ENCODE measurements at regions of chr19 and their contacts with region 1.

Region 1: DNA sequence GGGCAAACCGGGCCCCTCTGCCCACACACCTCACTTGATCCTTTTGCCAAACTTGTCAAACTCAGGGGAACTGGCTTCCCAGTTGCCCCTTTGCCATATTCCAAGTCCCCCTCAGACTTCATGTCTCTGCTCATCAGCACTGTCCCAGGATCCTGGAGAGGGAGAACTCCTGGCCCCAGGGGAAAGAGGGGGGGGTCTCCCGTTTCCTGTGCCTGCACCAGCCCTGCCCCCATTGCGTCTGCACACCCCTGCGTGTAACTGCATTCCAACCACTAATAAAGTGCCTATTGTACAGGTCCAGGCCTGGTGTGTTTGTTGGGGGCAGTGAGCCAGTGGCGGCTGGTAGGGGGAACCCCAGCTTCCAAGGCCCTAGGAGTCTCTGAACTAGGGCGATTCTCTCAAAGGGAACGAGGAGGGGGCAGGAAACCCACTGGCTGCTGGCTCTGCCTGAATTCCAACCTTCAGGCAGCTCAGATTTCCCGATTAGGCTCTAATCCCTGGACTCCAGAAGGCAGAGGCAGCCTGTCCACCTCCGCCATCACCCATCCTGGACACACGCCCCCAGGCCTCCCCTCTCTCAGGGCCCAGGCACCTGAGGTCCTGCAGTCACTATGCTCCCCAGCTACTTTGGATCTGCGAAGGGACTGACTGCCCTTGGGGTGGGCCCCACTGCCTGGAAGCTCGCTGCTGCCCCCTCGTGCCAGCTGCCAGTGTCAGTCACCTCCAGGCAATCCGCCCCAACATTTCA is 9.7 kb upstream of the ILF3 start:
- DNase-seq: peak; percentile 89
- ATAC-seq: peak; percentile 97
- H3K4me3 Mint-ChIP-seq: no peak overlapping the region
- H3K27ac Mint-ChIP-seq: no peak overlapping the region
- H3K4me1 Mint-ChIP-seq: peaks cover 4% of the 10 kb centered on the region
- H3K27me3 Mint-ChIP-seq: no peaks in the 10 kb centered on the region

Region 2: DNA sequence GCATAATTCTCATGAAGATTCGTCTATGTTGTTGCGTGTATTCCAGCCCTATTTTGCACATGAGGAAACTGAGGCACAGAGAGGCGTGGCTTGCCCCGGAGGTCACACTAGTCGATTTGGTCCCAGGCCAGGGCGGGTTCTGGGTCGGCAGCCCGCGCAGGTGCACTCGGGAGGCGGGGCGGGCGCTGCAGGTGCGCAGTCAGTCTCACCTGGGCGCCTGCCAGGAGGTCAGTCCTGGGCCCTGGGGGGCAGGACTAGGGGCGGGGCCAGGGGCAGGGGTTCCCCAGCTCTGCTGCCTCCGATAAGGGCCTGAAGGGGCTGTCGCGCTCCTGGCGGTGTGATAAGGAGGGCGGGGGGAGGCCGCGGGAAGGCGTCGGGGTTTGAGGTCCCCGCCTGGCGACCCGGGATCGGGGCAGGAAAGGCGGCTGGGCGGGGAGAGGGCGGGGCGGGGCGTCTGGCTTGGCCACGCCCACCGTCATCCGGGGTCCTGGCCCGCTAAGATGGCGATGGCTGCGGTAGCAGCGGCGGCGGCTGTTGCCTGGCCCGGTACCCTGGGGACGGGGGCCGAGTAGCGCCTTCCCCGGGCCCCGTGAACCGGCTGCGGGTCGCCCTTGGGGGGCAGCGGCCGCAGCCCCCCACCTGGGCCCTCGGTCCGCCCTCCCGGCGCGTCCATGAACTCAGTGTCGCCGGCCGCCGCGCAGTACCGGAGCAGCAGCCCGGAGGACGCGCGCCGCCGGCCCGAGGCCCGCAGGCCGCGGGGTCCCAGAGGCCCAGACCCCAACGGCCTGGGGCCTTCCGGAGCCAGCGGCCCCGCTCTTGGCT is 100.8 kb before region 1 on chr19 and contains the start of gene ATG4D:
- CTCF ChIA-PET with region 1: interaction called, 32 read pairs
- DNase-seq: peak; percentile 84
- ATAC-seq: peak; percentile 88
- H3K4me3 Mint-ChIP-seq: peak within 1 kb of the TSS; percentile 93
- H3K27ac Mint-ChIP-seq: peak within 1 kb of the TSS; percentile 93
- H3K4me1 Mint-ChIP-seq: peaks cover 16% of the 10 kb centered on the region
- H3K27me3 Mint-ChIP-seq: peaks cover 16% of the 10 kb centered on the region
- total RNA-seq, gene ATG4D: 48.3 to 57.8 TPM

Region 3: DNA sequence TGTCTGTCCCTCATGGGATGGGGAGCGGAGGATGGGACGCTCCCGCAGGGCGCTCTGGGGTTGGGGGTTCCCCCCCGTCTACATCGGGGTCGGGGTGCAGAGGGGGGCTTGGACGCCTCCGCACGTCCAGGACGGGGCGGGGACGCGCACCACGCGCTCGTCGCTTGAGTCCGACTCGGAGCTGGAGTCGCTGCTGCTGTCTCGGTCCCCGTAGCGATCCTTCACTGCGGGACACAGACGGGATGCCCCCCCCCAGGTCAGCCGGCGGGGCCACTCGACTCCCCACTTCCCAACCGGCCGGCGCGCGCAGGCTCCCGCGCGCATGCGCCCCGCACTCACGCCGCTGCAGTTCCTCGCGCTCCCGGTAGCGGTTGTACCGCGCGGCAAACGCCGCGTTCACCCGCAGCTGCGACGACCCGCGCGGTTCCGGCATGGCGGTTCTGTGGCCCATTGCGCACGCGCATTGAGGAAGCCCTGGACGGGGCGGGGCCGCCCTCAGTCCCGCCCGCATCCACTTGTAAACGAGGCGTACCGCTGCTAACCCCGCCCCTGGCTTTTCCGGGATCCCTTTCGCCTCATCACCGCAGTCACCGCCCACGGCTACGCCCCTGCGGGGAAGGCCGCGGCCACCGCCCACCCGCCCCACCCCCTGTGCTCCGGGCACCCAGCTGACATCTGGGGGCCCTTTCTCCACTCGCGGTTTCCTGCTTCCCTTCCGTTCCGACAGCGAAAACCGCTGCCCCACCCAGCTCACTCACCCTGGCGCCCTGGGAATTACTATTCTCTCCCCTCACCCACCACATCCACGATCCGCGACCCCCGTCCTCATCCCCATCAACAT is 78.6 kb before region 1 on chr19 and contains the start of gene KRI1:
- CTCF ChIA-PET with region 1: interaction called, 10 read pairs
- DNase-seq: peak; percentile 99
- ATAC-seq: peak; percentile 48
- H3K4me3 Mint-ChIP-seq: peak within 1 kb of the TSS; percentile 96
- H3K27ac Mint-ChIP-seq: peak within 1 kb of the TSS; percentile 93
- H3K4me1 Mint-ChIP-seq: peaks cover 40% of the 10 kb centered on the region
- H3K27me3 Mint-ChIP-seq: no peaks in the 10 kb centered on the region
- total RNA-seq, gene KRI1: 68.1 to 72.2 TPM

Region 4: GRCh38 chr19:10574462-10574861 is 70.0 kb before region 1 on chr19:
- CTCF ChIA-PET with region 1: interaction called, 281 read pairs
- DNase-seq: no peak
- ATAC-seq: no peak
- H3K4me3 Mint-ChIP-seq: no peak overlapping the region
- H3K27ac Mint-ChIP-seq: no peak overlapping the region
- H3K4me1 Mint-ChIP-seq: peaks cover 27% of the 10 kb centered on the region
- H3K27me3 Mint-ChIP-seq: no peaks in the 10 kb centered on the region

Region 5: GRCh38 chr19:10593820-10594637 is 50.4 kb before region 1 on chr19:
- CTCF ChIA-PET with region 1: interaction called, 33 read pairs
- DNase-seq: no peak
- ATAC-seq: no peak
- H3K4me3 Mint-ChIP-seq: no peak overlapping the region
- H3K27ac Mint-ChIP-seq: no peak overlapping the region
- H3K4me1 Mint-ChIP-seq: peaks cover 28% of the 10 kb centered on the region
- H3K27me3 Mint-ChIP-seq: no peaks in the 10 kb centered on the region

Region 6: DNA sequence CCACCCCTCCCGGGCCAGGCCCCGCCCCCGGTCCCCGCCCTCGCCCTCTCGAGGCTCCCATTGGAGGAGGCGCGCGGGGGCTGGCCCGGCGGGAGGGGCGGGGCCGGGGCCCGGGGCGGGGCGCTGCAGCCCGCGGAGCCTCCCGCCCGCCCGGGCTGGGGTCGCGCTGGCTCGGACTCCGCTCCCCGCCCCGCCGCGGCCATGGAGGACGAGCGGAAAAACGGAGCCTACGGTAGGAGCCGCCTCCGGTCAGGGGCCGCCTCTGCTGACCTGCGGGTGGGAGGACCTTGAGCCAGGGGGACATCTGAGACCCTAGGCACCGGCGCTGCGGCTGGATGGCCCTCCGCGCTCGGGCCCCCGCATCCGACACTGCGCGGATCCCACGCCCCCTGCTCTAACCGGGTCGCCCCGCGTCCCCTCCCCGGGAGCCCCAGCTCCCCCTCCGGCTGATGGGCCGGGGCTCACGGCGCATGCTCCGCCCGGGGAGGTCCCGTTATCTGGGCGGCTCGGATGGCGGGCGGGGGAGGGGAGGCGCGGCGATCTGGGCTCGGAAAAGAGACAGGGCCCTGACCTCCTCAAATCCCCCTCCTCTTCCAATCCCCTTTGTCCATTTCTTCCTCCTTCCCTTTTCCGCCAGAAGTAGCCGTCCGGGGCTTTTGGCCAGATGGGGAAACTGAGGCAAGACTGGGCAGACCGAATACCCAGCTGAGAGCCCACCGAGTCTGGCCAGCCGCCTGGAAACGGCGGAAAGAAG is 41.9 kb before region 1 on chr19:
- CTCF ChIA-PET with region 1: interaction called, 33 read pairs
- DNase-seq: peak; percentile 92
- ATAC-seq: peak; percentile 90
- H3K4me3 Mint-ChIP-seq: peak overlapping the region; percentile 90
- H3K27ac Mint-ChIP-seq: peak overlapping the region; percentile 99
- H3K4me1 Mint-ChIP-seq: peaks cover 23% of the 10 kb centered on the region
- H3K27me3 Mint-ChIP-seq: peaks cover 2% of the 10 kb centered on the region